OCI-LY7 (cell line): ENCODE measurements at regions of chr1 and their contacts with region 1.

Region 1: GRCh38 chr1:85707990-85708828 is at the start of gene ZNHIT6:
- DNase-seq: peak; percentile 96
- H3K4me3 ChIP-seq: peak within 1 kb of the TSS; percentile 92
- H3K27ac ChIP-seq: peak within 1 kb of the TSS; percentile 61
- H3K4me1 ChIP-seq: peaks cover 23% of the 10 kb centered on the region
- CTCF ChIP-seq: peak; percentile 54
- total RNA-seq, gene ZNHIT6: 14.5 and 18.5 TPM in 2 replicates

Region 2: DNA sequence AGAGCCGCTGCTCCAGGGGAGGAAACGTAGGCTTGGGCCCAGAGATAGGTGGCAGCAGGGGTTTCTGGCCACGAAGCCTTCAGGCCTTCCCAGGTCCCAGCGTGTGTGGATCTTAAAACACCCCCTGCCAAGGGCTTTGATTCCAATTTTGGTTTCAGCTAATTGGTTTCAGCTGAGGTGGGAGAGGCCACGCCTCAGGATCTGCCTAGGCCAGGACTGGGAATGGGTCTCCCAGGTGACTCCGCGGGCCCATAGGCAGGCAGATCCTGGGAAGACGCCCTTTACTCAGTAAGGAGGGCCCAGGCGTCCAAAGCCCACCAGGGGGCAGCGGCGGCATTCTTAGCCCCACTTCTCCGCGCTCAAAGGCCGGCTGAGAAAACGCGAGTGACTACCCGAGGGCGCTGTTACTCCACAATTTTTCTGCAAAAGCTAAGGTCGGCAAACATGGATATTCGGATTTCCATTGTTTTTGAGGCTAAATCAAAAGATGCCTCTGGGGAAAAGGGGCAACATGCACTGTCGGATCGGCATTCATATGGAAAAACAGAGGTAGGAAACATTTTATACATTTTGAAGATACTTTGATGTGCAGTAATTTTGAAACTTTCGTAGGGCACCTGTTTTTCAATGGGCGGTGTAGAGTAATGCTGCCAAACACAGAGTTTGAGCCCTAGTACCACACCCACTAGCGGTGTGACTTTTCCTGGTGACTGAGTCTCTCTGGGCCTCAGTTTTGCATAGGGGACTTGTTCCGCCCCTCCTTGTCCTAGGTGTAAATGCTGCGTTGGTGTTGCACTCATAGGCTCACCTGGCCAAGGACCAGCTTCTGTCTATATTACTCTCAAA is 400.0 kb before region 1 on chr1:
- CTCF ChIA-PET with region 1: no interaction called
- POLR2A ChIA-PET with region 1: no interaction called
- intact Hi-C with region 1: loop called (anchors 10 kb)
- DNase-seq: peak; percentile 61
- H3K4me3 ChIP-seq: no peak overlapping the region
- H3K27ac ChIP-seq: no peak overlapping the region
- H3K4me1 ChIP-seq: peaks cover 4% of the 10 kb centered on the region
- CTCF ChIP-seq: peak; percentile 85

Region 3: GRCh38 chr1:85692730-85693314 is 15.4 kb before region 1 on chr1:
- CTCF ChIA-PET with region 1: interaction called, 5 read pairs
- POLR2A ChIA-PET with region 1: interaction called, 9 read pairs
- intact Hi-C with region 1: loop called (anchors 2 kb)
- DNase-seq: no peak
- H3K4me3 ChIP-seq: no peak overlapping the region
- H3K27ac ChIP-seq: no peak overlapping the region
- H3K4me1 ChIP-seq: no peaks in the 10 kb centered on the region
- CTCF ChIP-seq: peak; percentile 75

Region 4: DNA sequence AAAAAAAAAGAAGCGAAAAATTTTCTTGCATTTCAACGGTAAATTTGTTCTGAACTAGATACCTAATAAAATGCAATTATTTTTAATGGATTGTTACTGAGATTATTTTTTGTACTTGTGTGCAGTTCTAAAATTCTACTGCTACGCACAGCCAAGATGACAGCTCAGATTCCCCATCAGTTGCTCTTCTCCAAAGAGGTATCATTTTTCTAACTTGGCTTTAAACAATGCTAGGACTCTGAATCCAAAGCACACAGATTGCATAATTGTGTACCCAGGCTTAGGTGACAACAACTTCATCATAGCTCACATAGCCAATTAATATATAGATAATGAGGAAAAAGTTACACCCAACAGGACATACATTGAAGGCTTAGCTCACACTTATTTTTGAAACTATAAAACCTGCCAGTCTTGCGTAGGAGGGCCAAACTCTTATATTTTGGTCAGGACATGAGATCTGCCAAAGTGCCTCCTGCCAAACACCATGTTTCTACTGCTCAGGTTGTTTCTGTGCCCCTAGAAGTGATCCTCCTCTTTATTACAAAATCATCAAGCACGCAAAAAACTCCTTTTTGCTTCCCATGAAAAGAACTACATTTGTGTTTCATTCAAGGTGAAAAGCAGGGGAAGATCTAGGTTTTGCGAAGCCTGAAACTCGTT is 10.6 kb after region 1 on chr1:
- CTCF ChIA-PET with region 1: no interaction called
- POLR2A ChIA-PET with region 1: interaction called, 11 read pairs
- intact Hi-C with region 1: no loop called
- DNase-seq: no peak
- H3K4me3 ChIP-seq: no peak overlapping the region
- H3K27ac ChIP-seq: no peak overlapping the region
- H3K4me1 ChIP-seq: no peaks in the 10 kb centered on the region
- CTCF ChIP-seq: no peak

Region 5: GRCh38 chr1:85894651-85895050 is 186.4 kb after region 1 on chr1:
- CTCF ChIA-PET with region 1: no interaction called
- POLR2A ChIA-PET with region 1: no interaction called
- intact Hi-C with region 1: no loop called
- DNase-seq: peak; percentile 23
- H3K4me3 ChIP-seq: no peak overlapping the region
- H3K27ac ChIP-seq: no peak overlapping the region
- H3K4me1 ChIP-seq: no peaks in the 10 kb centered on the region
- CTCF ChIP-seq: peak; percentile 76

Region 6: DNA sequence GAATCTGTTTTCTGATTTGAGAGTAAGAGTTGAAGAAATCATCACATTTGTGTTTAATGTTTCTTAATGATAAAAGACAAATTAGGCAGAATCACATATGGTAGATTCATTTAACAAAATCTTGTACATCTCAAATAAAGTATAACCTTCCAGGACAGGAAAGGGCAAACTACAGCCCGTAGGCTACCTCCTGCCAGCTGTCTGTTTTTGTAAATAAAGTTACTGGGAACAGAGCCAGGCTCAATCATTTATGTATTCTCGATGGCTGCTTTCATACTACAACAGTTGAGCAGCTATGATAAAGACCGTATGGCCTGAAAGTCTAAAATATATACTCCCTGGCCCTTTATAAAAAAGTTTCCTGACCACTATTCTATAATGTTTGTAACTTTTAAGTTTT is 244.3 kb after region 1 on chr1:
- CTCF ChIA-PET with region 1: no interaction called
- POLR2A ChIA-PET with region 1: no interaction called
- intact Hi-C with region 1: no loop called
- DNase-seq: no peak
- H3K4me3 ChIP-seq: no peak overlapping the region
- H3K27ac ChIP-seq: no peak overlapping the region
- H3K4me1 ChIP-seq: no peaks in the 10 kb centered on the region
- CTCF ChIP-seq: no peak